Activated CD8-positive, alpha-beta T cell treated with anti-CD3 and anti-CD28 coated beads, Interleukin-2, amount 10 ng/mL, durations not matched to agents 7 days and 5 days (primary cell): ENCODE measurements at regions of chr19 and their contacts with region 1.

Region 1: DNA sequence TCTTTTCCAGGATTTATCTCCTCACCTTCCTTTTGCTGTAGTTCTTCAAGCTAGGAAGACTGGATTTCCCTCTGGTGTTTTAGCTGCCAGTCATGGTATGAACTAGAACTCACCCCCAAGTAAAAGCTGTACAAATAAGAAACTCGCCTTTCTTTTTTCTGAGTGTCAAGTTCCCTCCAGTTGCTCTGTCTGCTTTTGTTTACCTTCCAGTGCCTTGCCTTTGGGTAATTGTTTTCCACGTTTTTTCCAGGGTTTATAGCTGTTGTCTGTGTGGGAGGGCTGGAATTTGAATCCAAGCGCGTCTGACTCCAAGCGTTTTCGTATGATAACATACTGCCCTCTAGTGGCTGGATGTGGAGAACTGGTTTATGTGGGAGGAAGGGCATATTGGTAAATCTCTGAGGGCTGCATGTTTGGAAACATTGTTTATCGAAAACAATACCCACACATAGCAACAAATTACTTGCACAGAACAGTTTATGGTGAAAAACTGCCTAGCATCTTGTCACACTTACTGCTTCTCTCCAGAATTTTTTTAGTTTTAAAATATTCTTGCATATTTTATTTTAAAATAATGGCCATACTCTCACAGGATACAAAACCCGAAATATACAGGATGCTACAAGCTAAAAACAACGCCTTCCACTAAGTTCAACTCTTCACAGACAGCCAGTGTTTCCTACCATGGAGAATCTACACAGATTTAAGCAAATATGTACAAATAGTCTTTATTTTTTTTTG is 19.2 kb downstream of the RCN3 start:
- DNase-seq: peak; percentile 84
- ATAC-seq: peak; percentile 77
- H3K4me3 Mint-ChIP-seq: peak overlapping the region; percentile 28
- H3K27ac Mint-ChIP-seq: peak overlapping the region; percentile 65
- H3K4me1 Mint-ChIP-seq: peaks cover 50% of the 10 kb centered on the region
- H3K27me3 Mint-ChIP-seq: peaks cover 4% of the 10 kb centered on the region

Region 2: GRCh38 chr19:49487277-49488045 is 59.5 kb before region 1 on chr19 and contains the start of gene RPL13A:
- CTCF ChIA-PET with region 1: interaction called, 12 read pairs
- POLR2A ChIA-PET with region 1: no interaction called
- DNase-seq: peak; percentile 100
- ATAC-seq: peak; percentile 89
- H3K4me3 Mint-ChIP-seq: peak within 1 kb of the TSS; percentile 98
- H3K27ac Mint-ChIP-seq: peak within 1 kb of the TSS; percentile 96
- H3K4me1 Mint-ChIP-seq: peaks cover 53% of the 10 kb centered on the region
- H3K27me3 Mint-ChIP-seq: no peaks in the 10 kb centered on the region
- total RNA-seq, gene RPL13A: 1,992 to 2,019 TPM

Region 3: DNA sequence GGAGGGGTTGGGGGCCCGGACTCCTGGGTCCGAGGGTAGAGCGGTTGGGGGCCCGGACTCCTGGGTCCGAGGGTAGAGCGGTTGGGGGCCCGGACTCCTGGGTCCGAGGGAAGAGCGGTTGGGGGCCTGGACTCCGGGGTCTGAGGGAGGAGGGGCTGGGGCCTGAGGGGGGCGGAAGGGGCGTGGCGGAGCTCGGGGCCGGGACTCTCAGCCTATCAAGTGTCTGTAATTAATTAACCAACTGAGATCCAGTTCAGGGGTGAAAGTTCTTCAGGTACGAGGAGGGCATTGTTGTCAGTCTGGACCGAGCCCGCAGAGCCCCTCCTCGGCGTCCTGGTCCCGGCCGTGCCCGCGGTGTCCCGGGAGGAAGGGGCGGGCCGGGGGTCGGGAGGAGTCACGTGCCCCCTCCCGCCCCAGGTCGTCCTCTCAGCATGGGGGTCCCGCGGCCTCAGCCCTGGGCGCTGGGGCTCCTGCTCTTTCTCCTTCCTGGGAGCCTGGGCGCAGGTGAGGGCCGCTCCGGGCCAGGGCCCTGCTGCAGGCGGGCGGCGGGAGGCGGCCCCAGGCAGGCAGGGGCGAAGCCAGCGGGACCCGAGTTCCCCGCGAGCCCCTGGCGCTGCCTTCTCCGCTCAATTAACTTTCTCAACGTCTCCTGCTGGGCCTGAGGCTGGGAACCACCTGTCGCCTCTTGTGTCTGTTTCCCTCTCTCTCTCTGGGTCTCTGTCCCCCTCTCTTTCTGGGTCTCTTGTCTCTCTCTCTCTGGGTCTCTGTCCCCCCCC is 33.8 kb before region 1 on chr19:
- CTCF ChIA-PET with region 1: interaction called, 211 read pairs
- POLR2A ChIA-PET with region 1: no interaction called
- DNase-seq: no peak
- ATAC-seq: peak; percentile 78
- H3K4me3 Mint-ChIP-seq: peak overlapping the region; percentile 74
- H3K27ac Mint-ChIP-seq: peak overlapping the region; percentile 69
- H3K4me1 Mint-ChIP-seq: peaks cover 28% of the 10 kb centered on the region
- H3K27me3 Mint-ChIP-seq: peaks cover 1% of the 10 kb centered on the region

Region 4: GRCh38 chr19:49533551-49534488 is 13.2 kb before region 1 on chr19:
- CTCF ChIA-PET with region 1: interaction called, 52 read pairs
- POLR2A ChIA-PET with region 1: interaction called, 4 read pairs
- DNase-seq: peak; percentile 84
- ATAC-seq: peak; percentile 95
- H3K4me3 Mint-ChIP-seq: peak overlapping the region; percentile 71
- H3K27ac Mint-ChIP-seq: peak overlapping the region; percentile 77
- H3K4me1 Mint-ChIP-seq: peaks cover 30% of the 10 kb centered on the region
- H3K27me3 Mint-ChIP-seq: peaks cover 10% of the 10 kb centered on the region

Region 5: GRCh38 chr19:49570138-49570856 is 23.3 kb after region 1 on chr19:
- CTCF ChIA-PET with region 1: interaction called, 213 read pairs
- POLR2A ChIA-PET with region 1: interaction called, 8 read pairs
- DNase-seq: peak; percentile 88
- ATAC-seq: peak; percentile 16
- H3K4me3 Mint-ChIP-seq: peak overlapping the region; percentile 7
- H3K27ac Mint-ChIP-seq: peak overlapping the region; percentile 66
- H3K4me1 Mint-ChIP-seq: peaks cover 65% of the 10 kb centered on the region
- H3K27me3 Mint-ChIP-seq: no peaks in the 10 kb centered on the region